ENCODE measurements at regions of chr12 and their contacts with region 1.

Region 1: DNA sequence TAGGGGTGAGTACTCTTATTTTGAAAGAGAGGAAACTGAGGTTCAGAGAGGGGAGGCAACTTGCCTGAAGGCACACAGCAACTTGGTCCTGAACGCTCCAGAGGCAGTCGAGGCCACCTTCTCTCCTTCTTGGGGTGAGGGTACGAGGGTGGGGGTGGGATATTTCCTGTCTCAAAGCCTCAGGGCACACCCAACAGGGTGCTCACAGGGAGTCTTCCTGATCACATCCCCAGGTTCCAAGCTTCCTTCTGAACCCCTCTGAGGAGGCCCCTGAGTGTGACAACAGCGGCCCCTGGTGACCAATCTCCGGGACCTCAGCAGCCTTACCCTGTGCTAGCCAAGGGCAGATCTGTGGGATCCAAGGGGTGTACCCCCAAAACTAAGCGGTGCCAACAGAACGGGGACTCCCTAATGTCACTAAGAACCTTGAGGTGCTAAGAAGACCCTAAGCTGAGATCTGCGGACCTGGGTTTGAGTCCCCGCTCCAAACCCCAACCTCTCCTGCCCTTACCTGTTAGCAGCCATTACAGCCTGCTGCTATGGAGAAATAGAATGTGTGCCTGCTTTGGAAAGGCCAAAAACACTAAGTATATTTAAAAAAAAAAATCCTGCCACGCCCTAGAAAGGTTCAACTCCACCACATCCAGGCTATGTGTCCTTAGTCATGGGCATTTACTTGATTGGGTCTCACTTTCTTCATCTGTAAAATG is 57.9 kb downstream of the TRPV4 start:
- DNase-seq: peak; percentile 52
- H3K4me3 ChIP-seq: no peak overlapping the region
- H3K27ac ChIP-seq: no peak overlapping the region
- H3K4me1 ChIP-seq: peaks cover 18% of the 10 kb centered on the region
- H3K27me3 ChIP-seq: no peaks in the 10 kb centered on the region
- CTCF ChIP-seq: peak; percentile 94 to 97

Region 2: DNA sequence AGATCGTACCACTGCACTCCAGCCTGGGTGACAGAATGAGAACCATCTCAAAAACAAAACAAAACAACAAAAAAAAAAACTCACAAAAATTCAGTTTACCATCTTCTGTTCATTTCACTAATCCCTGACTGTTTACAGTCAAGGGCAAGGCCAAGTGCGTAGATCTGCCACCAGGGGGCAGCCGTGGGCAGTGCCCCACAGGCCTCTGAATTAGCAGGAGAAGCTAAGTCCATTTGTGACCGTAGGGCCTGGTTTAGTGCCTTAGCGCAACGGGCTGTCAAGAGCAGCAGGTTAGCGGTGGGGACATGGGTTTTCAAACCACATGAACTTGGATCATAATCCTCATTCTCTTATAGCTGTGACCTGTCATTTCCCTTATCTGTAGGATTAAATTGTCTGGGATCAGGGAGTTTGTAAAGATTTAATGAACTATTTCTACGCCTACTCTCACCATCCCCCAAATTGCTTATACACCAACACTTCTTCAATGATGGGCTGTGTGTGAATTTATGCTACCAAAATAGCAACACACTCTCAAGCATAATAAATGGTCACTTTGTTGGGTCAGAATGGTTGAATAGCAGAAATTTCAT is 347.2 kb before region 1 on chr12:
- CTCF ChIA-PET with region 1: interaction called, 5 read pairs
- dilution Hi-C with region 1: no loop called
- in situ Hi-C with region 1: loop called (anchors 10 kb)
- intact Hi-C with region 1: loop called (anchors 1 kb)
- DNase-seq: peak; percentile 57
- H3K4me3 ChIP-seq: no peak overlapping the region
- H3K27ac ChIP-seq: no peak overlapping the region
- H3K4me1 ChIP-seq: peaks cover 6% of the 10 kb centered on the region
- H3K27me3 ChIP-seq: no peaks in the 10 kb centered on the region
- CTCF ChIP-seq: peak; percentile 99

Region 3: GRCh38 chr12:109592905-109593272 is 182.4 kb before region 1 on chr12:
- CTCF ChIA-PET with region 1: interaction called, 6 read pairs
- dilution Hi-C with region 1: no loop called
- in situ Hi-C with region 1: loop called in 1 of 2 experiments (anchors 5 kb)
- intact Hi-C with region 1: loop called (anchors 1 kb)
- DNase-seq: no peak
- H3K4me3 ChIP-seq: no peak overlapping the region
- H3K27ac ChIP-seq: no peak overlapping the region
- H3K4me1 ChIP-seq: peaks cover 2% of the 10 kb centered on the region
- H3K27me3 ChIP-seq: no peaks in the 10 kb centered on the region
- CTCF ChIP-seq: no peak

Region 4: DNA sequence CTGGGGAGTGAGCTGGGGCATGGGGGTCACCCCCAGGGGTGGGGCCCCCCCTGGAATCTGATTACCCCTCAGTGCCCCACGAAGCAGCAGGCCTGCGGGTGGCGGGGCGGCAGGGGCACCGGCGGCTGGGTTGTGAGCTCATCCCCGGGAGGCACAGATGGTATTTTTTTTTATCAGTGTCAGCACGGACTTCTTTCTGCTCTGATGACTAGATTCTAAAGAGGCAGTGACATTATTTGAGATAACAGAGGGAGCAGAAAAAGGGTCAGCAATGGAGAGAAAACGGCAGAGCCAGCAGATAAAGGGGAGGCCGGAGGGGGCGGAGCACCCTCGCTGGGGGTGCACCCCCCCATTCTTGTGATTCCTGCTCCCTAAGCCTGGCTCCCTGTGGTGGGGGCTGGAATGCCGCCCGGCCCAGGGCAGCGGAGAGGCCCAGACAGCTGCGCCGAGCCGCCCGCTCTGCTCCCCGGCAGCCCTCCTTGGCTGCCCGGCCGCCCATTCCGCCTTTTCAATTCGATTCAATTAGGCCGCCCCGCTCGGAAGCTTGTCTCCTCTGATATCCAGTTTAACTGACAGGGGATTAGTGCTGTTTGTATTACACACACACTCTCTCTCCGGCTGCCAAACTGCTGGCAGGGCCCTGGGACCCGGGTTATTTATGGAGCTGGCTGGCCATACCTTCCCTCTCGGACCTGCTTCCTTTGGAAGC is 168.9 kb before region 1 on chr12:
- CTCF ChIA-PET with region 1: no interaction called
- dilution Hi-C with region 1: no loop called
- in situ Hi-C with region 1: loop called in 1 of 2 experiments (anchors 5 kb)
- intact Hi-C with region 1: no loop called
- DNase-seq: no peak
- H3K4me3 ChIP-seq: no peak overlapping the region
- H3K27ac ChIP-seq: no peak overlapping the region
- H3K4me1 ChIP-seq: peaks cover 2% of the 10 kb centered on the region
- H3K27me3 ChIP-seq: no peaks in the 10 kb centered on the region
- CTCF ChIP-seq: no peak